Tibial artery (tissue), 4 donors: ENCODE measurements at regions of chr1 and their contacts with region 1.

Region 1: DNA sequence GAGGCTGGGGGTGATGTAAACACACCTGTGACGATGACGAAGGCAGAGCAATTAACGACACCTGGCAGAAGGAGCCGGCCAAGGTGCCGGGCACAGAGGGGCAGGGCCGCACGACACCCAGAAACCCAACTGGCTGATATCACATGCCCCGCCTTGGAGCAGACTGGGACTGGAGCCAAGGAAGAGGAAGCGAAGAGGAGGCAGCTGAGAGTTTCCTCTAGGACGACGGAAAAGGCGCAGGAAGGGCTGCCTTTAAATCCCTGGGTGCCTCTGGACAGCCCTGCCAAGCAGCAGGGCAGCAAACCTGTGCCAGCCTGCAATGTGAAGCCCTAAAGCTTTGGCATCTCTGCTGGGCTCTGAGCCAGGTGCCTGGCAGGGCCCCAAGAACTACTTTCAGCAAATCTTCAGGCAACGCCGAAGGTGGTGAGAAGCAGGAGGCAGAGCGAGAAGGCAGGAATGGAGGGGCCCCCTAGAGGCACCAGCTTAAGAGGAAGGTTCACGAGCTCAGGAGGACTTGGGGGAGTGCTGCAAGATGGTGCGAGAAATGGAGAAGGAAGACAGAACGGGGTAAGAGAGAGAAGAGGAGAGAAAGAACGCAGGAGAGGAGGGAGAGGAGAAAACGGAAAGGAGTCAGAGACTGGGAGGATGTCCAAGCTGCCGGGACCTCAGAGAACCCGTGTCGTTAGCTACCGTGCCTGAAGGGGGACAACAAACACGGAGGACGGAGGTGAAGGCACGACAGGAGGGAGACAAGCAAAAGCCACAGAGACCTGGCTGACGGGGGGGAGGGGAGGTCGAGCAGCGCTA is 25.3 kb upstream of the PEF1 start:
- DNase-seq: peak; percentile 71 to 96
- H3K4me3 ChIP-seq: peak overlapping the region; percentile 32 to 40
- H3K27ac ChIP-seq: peak overlapping the region; percentile 88 to 89
- H3K4me1 ChIP-seq: peaks cover 8 to 90% (median 75%) of the 10 kb centered on the region in 4 donors
- H3K27me3 ChIP-seq: no peaks in the 10 kb centered on the region
- CTCF ChIP-seq: peak; percentile 14 to 40

Region 2: GRCh38 chr1:31705080-31705866 is 35.3 kb after region 1 on chr1:
- intact Hi-C with region 1: loop called (anchors 2 kb)
- DNase-seq: peak; percentile 56 to 83
- H3K4me3 ChIP-seq: peak overlapping the region; percentile 54 to 62
- H3K27ac ChIP-seq: peak overlapping the region; percentile 83
- H3K4me1 ChIP-seq: peaks cover 4 to 66% (median 54%) of the 10 kb centered on the region in 4 donors
- H3K27me3 ChIP-seq: no peaks in the 10 kb centered on the region
- CTCF ChIP-seq: peak; percentile 35 to 57

Region 3: DNA sequence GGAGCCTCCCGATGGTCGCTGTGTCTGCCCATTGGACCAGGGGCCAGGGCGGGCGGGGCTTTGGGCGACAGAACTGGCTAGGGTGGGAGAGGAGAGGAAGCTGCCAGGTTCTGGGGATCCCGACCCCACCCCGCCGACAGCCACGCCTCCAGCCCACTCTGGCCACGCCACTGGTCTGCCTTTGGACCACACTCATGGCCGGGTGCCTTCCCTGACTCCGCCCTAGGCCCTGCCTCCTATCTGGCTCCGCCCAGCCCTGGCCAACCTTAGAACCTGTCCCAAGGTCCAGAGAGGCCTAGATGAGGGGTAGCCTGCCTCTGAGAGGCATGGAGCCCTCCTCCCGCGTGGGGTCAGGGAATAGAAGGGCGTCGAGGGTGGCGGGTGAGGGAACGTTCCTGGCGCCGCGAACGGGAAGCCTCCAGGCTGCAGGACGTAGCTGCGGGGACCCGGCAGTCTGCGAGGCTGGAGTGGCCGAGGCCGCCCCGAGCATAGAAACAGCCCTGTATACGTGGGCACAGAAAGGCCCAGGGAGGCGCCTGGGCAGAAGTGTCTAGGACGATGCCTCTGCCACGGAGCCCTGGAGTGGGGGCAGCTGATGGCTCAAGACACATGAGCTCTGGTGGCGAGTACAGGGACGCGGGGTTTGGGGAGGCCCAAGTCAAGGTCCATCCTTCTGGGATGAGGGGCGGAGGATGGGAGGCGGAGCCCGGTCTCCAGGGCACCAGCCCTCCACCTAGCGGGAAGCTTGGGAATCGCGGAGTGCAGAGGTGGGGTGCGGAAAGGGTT is 45.3 kb after region 1 on chr1:
- intact Hi-C with region 1: loop called (anchors 5 kb)
- DNase-seq: peak; percentile 96 to 99
- H3K4me3 ChIP-seq: peak overlapping the region; percentile 47 to 58
- H3K27ac ChIP-seq: peak overlapping the region; percentile 98 to 99
- H3K4me1 ChIP-seq: peaks cover 22 to 54% (median 42%) of the 10 kb centered on the region in 4 donors
- H3K27me3 ChIP-seq: no peaks in the 10 kb centered on the region
- CTCF ChIP-seq: peak; percentile 90 to 95